Dendritic cell treated with granulocyte-macrophage colony-stimulating factor and Interleukin-4, amounts not matched to agents 40 ng/mL and 50 ng/mL, for 4 days (primary cell): ENCODE measurements at regions of chr5 and their contacts with region 1.

Region 1: GRCh38 chr5:119484893-119485292 is 32.6 kb downstream of the HSD17B4 start:
- H3K4me3 Mint-ChIP-seq: no peak overlapping the region
- H3K27ac Mint-ChIP-seq: no peak overlapping the region
- H3K4me1 Mint-ChIP-seq: no peaks in the 10 kb centered on the region
- H3K27me3 Mint-ChIP-seq: no peaks in the 10 kb centered on the region

Region 2: GRCh38 chr5:118548755-118549720 is 935.9 kb before region 1 on chr5:
- intact Hi-C with region 1: no loop called
- H3K4me3 Mint-ChIP-seq: no peak overlapping the region
- H3K27ac Mint-ChIP-seq: no peak overlapping the region
- H3K4me1 Mint-ChIP-seq: no peaks in the 10 kb centered on the region
- H3K27me3 Mint-ChIP-seq: no peaks in the 10 kb centered on the region

Region 3: DNA sequence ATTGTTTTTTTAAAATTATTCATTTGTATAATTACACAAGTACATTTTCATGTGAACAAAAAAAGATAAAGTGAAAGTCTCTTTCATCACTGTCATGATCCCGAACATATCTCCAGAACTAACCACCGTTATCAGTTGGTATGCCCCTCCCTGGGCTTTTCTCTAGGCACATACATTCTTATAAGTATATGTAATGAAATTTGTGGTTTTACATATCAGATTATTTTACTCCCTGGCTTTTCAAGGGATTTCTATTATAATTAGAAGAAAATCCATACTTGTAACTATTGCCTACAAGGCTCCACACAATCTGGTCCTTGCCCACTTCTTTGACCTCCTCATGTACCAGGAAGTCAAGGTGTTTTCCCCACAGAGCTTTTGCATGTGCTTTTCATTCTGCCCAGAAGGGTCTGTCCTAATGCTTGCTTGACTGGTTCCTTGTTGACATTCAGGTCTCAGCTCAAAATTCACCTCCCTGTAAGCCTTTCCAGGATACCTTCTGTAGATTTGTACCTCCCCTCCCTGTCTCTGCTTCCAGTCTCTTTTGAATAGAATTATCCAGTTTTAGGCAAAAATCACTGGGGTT is 66.3 kb before region 1 on chr5:
- intact Hi-C with region 1: no loop called
- H3K4me3 Mint-ChIP-seq: no peak overlapping the region
- H3K27ac Mint-ChIP-seq: no peak overlapping the region
- H3K4me1 Mint-ChIP-seq: peaks cover 66% of the 10 kb centered on the region
- H3K27me3 Mint-ChIP-seq: no peaks in the 10 kb centered on the region

Region 4: DNA sequence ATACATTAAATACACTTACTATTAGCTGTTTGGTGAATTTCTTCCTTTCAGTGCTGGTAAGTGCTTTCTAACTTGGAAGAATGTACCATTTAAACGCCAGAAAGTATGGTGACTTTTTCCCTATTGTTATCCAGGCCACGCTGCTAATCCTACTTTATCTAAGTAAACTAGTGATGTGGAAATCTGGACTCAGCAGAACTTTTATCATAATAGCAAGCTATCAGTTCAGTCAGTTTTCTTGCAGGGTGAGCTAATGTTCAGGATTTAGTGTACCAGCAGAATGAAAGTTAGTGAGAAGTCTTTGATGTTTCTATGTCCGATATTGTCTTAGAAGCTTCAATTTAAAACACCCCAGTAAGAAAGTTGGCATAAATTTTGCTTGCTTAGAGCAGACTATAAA is 39.6 kb after region 1 on chr5:
- intact Hi-C with region 1: loop called (anchors 5 kb)
- H3K4me3 Mint-ChIP-seq: no peak overlapping the region
- H3K27ac Mint-ChIP-seq: no peak overlapping the region
- H3K4me1 Mint-ChIP-seq: no peaks in the 10 kb centered on the region
- H3K27me3 Mint-ChIP-seq: no peaks in the 10 kb centered on the region

Region 5: GRCh38 chr5:119655061-119655460 is 170.2 kb after region 1 on chr5:
- intact Hi-C with region 1: no loop called
- H3K4me3 Mint-ChIP-seq: no peak overlapping the region
- H3K27ac Mint-ChIP-seq: no peak overlapping the region
- H3K4me1 Mint-ChIP-seq: peaks cover 34% of the 10 kb centered on the region
- H3K27me3 Mint-ChIP-seq: peaks cover 4% of the 10 kb centered on the region